CD4-positive, alpha-beta T cell (primary cell): ENCODE measurements at regions of chr2 and their contacts with region 1.

Region 1: GRCh38 chr2:102418421-102418961 is 4.5 kb upstream of the IL18RAP start:
- DNase-seq: peak in 3 of 14 experiments; percentile 64 to 80 (median 72)
- ATAC-seq: peak; percentile 67
- H3K4me3 ChIP-seq: peak overlapping the region; percentile 44
- H3K4me3 Mint-ChIP-seq: peak overlapping the region; percentile 80
- H3K27ac ChIP-seq: peak overlapping the region in 1 of 2 donors; percentile 69
- H3K27ac Mint-ChIP-seq: peak overlapping the region; percentile 73
- H3K4me1 ChIP-seq: peaks cover 45% of the 10 kb centered on the region
- H3K4me1 Mint-ChIP-seq: peaks cover 72% of the 10 kb centered on the region
- H3K27me3 ChIP-seq: no peaks in the 10 kb centered on the region
- H3K27me3 Mint-ChIP-seq: no peaks in the 10 kb centered on the region
- CTCF ChIP-seq: no peak

Region 2: DNA sequence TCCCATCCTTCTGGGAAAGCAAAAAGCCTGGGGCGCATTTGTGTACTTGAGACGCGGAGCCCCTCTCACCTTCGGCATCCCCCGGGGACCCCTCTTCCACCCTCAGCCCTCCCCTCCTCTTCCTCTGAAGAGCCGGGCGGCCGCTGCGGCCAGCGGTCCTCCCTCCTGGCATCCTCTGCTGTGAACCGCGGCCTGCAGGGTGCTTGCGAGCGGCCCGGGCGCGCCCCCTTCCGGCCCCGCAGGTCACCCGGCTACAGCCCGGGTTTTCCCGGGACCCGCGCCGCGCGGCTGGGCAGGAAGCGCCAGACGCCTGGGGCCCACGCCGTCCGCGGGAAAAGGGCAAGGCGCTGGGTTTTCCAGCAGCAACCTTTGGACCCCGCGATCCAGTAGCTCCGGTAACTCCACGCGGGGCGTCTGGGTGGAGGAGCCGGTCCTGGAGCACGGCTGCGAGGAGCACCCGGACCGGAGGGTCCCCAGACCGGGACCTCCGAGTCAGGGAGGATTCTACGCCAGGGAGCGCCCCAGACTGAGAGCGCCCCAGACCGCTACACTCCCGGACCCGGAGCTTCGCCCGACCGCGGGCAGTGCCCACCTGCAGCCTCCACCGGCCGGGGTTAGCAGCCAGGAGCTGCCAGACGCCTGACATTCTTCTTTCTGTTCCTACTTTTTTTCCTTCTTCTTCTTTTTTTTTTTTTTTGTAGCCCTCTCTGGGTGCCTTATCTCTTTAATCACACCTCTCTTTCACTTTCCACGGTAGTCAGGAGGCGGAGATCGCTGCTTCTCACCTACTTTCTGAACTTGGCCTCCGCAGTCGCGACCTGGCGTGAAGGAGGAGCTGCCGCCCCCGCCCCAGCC is 62.7 kb before region 1 on chr2 and contains the start of gene IL18R1:
- CTCF ChIA-PET with region 1: interaction called, 3 read pairs
- POLR2A ChIA-PET with region 1: no interaction called
- intact Hi-C with region 1: loop called in 1 of 2 experiments (anchors 2 kb)
- DNase-seq: peak; percentile 29 to 88 (median 55)
- ATAC-seq: peak; percentile 76
- H3K4me3 ChIP-seq: peak within 1 kb of the TSS; percentile 97
- H3K4me3 Mint-ChIP-seq: peak within 1 kb of the TSS; percentile 91
- H3K27ac ChIP-seq: peak within 1 kb of the TSS; percentile 41 to 83
- H3K27ac Mint-ChIP-seq: peak within 1 kb of the TSS; percentile 87
- H3K4me1 ChIP-seq: peaks cover 27% of the 10 kb centered on the region
- H3K4me1 Mint-ChIP-seq: peaks cover 44% of the 10 kb centered on the region
- H3K27me3 ChIP-seq: no peaks in the 10 kb centered on the region
- H3K27me3 Mint-ChIP-seq: no peaks in the 10 kb centered on the region
- CTCF ChIP-seq: peak; percentile 92
- total RNA-seq, gene IL18R1: 7.6 to 9.1 TPM